Activated T-helper 1 cell treated with anti-CD3 and anti-CD28 coated beads, Interleukin-12 subunit alpha, Interleukin-12 subunit beta, Interleukin-2, Interleukin-4 antibody, amounts not matched to agents 30 ng/mL and 10 ng/mL and 1 ng/mL, durations not matched to agents 14 hours and 24 hours and 36 hours (primary cell): ENCODE measurements at regions of chr4 and their contacts with region 1.

Region 1: DNA sequence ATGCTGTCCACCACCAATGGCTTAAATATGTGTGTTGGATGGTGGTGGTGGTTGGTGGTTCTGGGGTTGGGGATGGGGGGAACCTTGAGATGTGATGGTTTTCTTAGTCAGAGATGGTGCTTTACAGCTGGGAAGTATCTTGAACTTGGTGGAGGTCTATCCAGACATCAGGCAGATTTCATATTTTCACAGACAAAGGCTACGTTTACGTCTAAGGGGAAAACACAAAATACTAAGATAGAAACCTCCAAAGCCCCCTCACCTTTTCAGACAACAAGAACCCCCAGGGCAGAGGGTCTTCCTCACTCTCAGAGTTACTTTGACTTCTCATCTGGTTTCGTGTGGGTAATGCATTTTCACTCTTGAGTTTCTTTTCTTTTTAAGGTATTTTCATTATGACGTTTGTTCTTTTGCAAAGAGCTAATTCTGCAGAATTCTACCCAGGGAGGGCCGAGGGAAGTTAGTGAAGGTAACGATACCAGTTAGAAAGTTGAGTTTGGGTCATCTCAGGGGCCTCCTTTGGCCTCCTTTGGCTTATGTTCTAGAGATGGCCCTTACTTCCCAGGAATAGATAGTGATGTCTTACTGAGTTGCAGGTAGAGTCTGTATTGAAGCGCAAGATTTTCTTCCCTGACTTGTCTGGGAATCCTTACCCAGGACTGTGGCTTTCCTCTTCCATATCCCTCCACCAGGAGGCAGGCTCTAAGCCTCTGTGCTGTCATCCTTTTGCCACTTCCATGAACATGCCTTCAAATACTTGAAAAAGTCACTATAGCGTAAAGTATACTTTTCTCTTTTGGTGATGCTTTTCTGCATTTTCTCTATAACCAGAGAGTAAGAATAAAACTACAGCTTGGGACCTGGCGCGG is 31.9 kb downstream of the RHOH start:
- DNase-seq: no peak
- H3K4me3 Mint-ChIP-seq: peak overlapping the region; percentile 64
- H3K27ac Mint-ChIP-seq: peak overlapping the region; percentile 90
- H3K4me1 Mint-ChIP-seq: peaks cover 88% of the 10 kb centered on the region
- H3K27me3 Mint-ChIP-seq: no peaks in the 10 kb centered on the region

Region 2: DNA sequence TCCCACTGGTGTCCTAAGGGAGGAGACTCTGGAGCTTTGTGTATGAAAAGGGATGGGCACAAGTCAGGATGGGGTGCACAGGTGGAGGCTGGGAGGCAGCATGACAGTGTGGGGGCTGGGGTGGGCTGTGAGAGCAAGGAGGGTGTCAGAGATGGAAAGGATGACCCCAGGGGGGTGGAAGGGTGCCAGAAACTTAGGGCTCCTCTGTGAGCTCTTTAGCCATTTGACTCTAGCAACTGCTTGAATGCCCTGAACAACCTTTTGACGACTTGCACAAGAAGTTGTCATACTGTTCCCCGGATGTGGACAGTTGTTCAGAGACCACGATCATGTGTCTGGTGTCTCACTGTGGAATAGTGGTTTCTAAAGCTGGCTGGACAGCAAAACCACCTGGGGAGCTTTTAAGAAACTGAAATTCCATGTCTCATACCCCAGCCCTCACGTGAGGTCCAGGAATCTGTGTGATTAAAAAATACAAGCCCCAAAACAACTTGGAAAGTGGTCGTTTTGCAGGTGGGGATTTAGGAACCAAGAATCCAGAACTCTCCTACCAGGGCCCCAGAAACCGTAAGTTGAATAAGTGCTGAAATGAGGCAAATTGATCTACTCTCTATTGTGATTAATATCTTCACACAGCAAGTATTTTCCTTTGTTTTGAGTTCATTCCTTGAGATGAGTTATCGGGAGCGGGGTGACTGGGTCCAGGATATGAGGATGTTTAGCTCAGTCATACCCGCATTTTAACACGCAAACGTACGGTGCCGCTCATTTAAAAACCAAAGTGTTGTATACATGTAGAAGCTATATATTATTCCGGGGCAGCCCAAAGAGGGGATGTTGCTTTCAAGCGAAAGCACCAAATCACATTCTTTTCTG is 28.5 kb before region 1 on chr4:
- intact Hi-C with region 1: loop called (anchors 1 kb)
- DNase-seq: peak; percentile 76
- H3K4me3 Mint-ChIP-seq: peak overlapping the region; percentile 95
- H3K27ac Mint-ChIP-seq: peak overlapping the region; percentile 97
- H3K4me1 Mint-ChIP-seq: peaks cover 60% of the 10 kb centered on the region
- H3K27me3 Mint-ChIP-seq: no peaks in the 10 kb centered on the region

Region 3: DNA sequence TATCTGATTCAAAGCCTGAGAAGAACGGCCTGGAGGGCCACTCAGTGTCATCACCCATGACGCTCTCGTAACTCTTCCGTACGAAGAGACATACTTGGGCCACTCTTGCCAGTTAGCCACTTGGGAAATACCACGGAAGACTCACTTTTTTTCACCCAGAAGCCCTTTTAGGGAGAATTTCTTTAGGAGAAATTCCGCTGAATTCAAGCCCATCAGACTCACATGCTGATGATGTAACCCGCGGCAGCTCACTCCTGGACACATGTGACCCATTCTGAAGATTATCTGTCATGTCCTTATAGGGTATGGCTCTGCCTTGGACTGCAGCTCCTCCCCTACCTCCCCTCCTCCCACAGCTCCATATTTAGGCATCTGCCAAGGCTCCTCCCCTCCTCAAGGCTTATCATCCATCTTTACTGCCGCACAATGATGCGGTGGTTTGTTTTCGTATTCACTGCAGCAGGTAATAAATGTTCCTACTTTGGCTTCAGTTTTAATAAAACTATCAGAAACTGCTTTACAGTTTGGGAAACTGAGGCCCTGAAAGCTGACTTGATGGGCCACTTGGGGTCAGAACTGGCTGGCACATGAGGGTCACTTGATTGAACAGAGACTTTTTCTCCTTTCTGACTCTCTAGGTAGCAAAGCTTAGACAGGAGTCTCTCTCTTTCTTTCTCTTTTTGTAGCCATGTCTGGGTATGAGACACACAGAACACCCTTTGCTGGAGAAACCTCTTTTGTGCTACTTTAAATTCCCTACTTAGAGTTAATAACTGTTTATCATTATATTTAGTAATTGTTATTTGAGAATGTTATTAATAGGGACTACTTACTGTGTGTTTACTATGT is 10.2 kb after region 1 on chr4:
- intact Hi-C with region 1: loop called (anchors 1 kb)
- DNase-seq: peak; percentile 72
- H3K4me3 Mint-ChIP-seq: peak overlapping the region; percentile 83
- H3K27ac Mint-ChIP-seq: peak overlapping the region; percentile 92
- H3K4me1 Mint-ChIP-seq: peaks cover 90% of the 10 kb centered on the region
- H3K27me3 Mint-ChIP-seq: no peaks in the 10 kb centered on the region

Region 4: DNA sequence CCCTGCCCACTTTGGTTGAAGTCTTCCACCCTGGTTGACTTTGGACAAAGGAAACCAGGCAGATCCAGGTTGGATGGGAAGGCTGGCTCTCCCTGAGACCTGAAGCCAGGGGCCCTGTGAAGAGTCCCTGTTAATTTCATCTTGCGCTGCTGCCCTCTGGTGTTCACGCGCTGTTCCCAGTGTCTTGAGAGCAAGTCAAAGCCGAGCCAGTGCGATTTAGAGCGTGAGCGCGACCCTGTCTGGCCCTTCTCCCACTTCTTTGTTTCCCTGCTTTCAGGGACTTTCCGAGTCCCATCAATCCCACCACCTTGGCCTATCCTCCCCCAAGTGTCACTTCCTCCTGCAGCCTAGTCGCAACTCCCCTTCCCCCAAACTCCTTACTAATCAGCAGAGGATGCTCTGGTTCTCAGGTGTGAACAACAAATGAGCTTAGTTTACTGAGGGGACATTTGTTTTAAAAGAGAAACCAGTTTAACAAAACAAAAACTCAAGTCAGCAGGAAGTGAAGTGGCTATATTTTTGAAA is 80.6 kb after region 1 on chr4:
- intact Hi-C with region 1: loop called (anchors 1 kb)
- DNase-seq: peak; percentile 81
- H3K4me3 Mint-ChIP-seq: peak overlapping the region; percentile 67
- H3K27ac Mint-ChIP-seq: peak overlapping the region; percentile 94
- H3K4me1 Mint-ChIP-seq: peaks cover 88% of the 10 kb centered on the region
- H3K27me3 Mint-ChIP-seq: no peaks in the 10 kb centered on the region

Region 5: DNA sequence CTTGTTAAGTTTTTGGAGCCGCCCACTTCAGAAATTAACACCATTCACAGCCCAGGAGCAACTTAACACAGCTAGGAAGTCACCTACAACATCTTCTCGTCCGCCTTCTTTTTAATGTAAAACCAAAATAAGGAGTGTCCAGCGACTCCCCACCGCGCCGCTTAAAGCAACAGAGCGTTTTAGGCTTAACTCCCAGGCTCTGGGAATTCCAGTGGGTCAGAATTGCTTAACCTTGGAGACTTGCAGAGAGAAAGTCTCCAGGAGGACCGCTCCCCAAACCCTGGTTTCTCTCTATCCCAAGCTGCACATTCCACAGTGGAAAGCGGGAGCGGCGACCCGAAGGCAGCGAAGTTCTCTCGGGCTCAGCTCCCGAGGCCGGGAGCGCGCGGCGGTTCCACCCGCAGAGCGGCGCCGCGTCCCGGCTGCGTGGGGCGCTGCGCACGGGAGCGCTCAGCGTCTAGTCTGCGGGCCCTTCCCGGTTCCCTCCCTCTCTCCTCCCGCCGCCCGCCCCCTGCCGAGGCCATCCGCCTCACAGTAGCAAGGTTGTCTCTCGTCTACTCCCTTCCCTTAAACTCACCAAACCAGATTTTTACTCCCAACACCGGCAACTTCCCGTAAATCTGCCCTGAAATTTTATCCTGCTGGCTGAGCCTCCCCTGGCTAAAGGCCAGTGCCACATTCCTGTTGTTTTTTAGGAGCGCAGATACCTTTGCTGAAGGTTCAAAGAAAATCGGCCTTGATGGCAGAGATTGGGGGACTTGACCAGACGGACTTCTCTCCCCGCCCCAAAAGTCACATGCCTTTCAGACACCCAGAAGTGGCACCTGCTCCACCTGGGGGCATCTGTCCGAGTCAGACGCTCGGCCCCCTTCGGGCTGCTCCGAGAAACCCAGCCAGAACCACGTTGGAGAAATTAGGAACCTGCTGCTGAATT is 400.9 kb after region 1 on chr4 and contains the start of gene RBM47:
- intact Hi-C with region 1: loop called (anchors 10 kb)
- DNase-seq: peak; percentile 12
- H3K4me3 Mint-ChIP-seq: peak within 1 kb of the TSS; percentile 92
- H3K27ac Mint-ChIP-seq: peak within 1 kb of the TSS; percentile 84
- H3K4me1 Mint-ChIP-seq: peaks cover 41% of the 10 kb centered on the region
- H3K27me3 Mint-ChIP-seq: peaks cover 2% of the 10 kb centered on the region
- total RNA-seq, gene RBM47: 20.3 and 21.4 TPM in 2 replicates

Region 6: GRCh38 chr4:40908702-40909362 is 680.1 kb after region 1 on chr4:
- intact Hi-C with region 1: loop called (anchors 1 kb)
- DNase-seq: peak; percentile 61
- H3K4me3 Mint-ChIP-seq: peak overlapping the region; percentile 43
- H3K27ac Mint-ChIP-seq: peak overlapping the region; percentile 91
- H3K4me1 Mint-ChIP-seq: peaks cover 34% of the 10 kb centered on the region
- H3K27me3 Mint-ChIP-seq: no peaks in the 10 kb centered on the region